Caco-2 (cell line): ENCODE measurements at regions of chr12 and their contacts with region 1.

Region 1: GRCh38 chr12:100266835-100267618 is at the starts of genes DEPDC4 and SCYL2:
- DNase-seq: peak; percentile 95 to 96
- H3K4me3 ChIP-seq: peak within 1 kb of the TSS; percentile 76
- H3K4me3 Mint-ChIP-seq: peak within 1 kb of the TSS; percentile 99
- H3K27ac Mint-ChIP-seq: peak within 1 kb of the TSS; percentile 98
- H3K4me1 ChIP-seq: peaks cover 8% of the 10 kb centered on the region
- H3K4me1 Mint-ChIP-seq: peaks cover 16% of the 10 kb centered on the region
- H3K27me3 ChIP-seq: no peaks in the 10 kb centered on the region
- H3K27me3 Mint-ChIP-seq: no peaks in the 10 kb centered on the region
- CTCF ChIP-seq: no peak
- total RNA-seq, gene DEPDC4: 3.9 and 4.9 TPM in 2 replicates
- total RNA-seq, gene SCYL2: 49.5 and 55.2 TPM in 2 replicates

Region 2: DNA sequence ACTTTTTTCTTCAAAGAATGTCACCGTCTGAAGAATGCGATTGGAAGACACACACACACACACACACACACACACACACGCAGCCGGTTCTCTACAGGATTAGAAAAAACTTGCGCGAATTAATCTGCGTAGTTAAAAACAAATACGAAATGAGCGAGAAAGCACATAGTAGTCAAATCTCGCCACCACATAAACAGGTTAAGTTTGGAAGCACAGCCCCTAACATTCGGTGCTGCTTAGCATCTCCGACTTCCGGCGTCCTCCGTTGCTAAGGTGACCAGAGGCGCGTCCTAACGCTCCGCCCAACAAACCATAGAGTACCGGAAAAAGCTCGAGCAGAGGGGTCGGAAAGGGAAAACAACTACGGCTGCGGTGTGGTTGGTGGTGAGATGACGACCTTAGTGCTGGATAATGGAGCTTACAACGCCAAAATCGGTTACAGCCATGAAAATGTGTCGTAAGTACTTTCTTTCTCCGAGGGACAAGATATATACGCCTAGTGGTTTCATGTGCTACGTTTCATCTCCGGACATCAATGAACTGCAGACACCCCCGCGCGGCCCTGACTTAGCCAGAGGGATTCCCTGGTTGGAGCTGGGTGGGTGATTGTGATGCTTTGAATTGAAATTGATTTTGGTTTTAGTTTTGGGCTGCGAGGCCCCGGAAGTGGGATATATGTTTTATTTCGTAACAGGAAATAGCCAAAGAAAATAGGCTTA is 66.4 kb before region 1 on chr12 and contains the start of gene ACTR6:
- CTCF ChIA-PET with region 1: no interaction called
- POLR2A ChIA-PET with region 1: interaction called, 3 read pairs
- intact Hi-C with region 1: loop called (anchors 2 kb)
- DNase-seq: peak; percentile 94
- H3K4me3 ChIP-seq: peak within 1 kb of the TSS; percentile 65
- H3K4me3 Mint-ChIP-seq: peak within 1 kb of the TSS; percentile 88
- H3K27ac Mint-ChIP-seq: peak within 1 kb of the TSS; percentile 48
- H3K4me1 ChIP-seq: peaks cover 7% of the 10 kb centered on the region
- H3K4me1 Mint-ChIP-seq: no peaks in the 10 kb centered on the region
- H3K27me3 ChIP-seq: no peaks in the 10 kb centered on the region
- H3K27me3 Mint-ChIP-seq: no peaks in the 10 kb centered on the region
- CTCF ChIP-seq: no peak
- total RNA-seq, gene ACTR6: 25.0 and 26.0 TPM in 2 replicates

Region 3: GRCh38 chr12:100234598-100235304 is 32.3 kb before region 1 on chr12:
- CTCF ChIA-PET with region 1: interaction called, 6 read pairs
- POLR2A ChIA-PET with region 1: interaction called, 3 read pairs
- intact Hi-C with region 1: loop called (anchors 2 kb)
- DNase-seq: peak in 1 of 2 experiments; percentile 31
- H3K4me3 ChIP-seq: no peak overlapping the region
- H3K4me3 Mint-ChIP-seq: peak overlapping the region; percentile 23
- H3K27ac Mint-ChIP-seq: no peak overlapping the region
- H3K4me1 ChIP-seq: peaks cover 9% of the 10 kb centered on the region
- H3K4me1 Mint-ChIP-seq: peaks cover 13% of the 10 kb centered on the region
- H3K27me3 ChIP-seq: no peaks in the 10 kb centered on the region
- H3K27me3 Mint-ChIP-seq: no peaks in the 10 kb centered on the region
- CTCF ChIP-seq: peak; percentile 53 to 64

Region 4: DNA sequence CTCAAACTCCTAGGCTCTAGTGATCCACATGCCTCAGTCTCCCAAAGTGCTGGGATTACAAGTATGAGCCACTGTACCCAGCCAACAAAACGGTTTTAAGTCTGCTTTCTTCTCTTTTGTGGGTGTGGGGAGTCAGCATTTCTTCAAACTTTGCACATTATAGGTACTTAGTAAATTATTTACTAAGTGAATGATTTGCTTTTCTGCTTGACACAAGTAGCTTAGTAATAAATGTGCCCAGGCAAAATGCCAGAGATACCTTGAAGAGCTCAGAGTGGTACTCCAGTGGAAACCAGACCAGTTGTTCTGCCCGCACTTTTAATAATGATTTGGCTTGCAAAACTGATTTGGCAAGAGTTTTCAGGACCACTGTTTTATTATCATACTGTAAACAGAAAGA is 15.1 kb before region 1 on chr12:
- CTCF ChIA-PET with region 1: interaction called, 5 read pairs
- POLR2A ChIA-PET with region 1: interaction called, 8 read pairs
- intact Hi-C with region 1: loop called (anchors 2 kb)
- DNase-seq: no peak
- H3K4me3 ChIP-seq: no peak overlapping the region
- H3K4me3 Mint-ChIP-seq: no peak overlapping the region
- H3K27ac Mint-ChIP-seq: no peak overlapping the region
- H3K4me1 ChIP-seq: peaks cover 19% of the 10 kb centered on the region
- H3K4me1 Mint-ChIP-seq: peaks cover 18% of the 10 kb centered on the region
- H3K27me3 ChIP-seq: no peaks in the 10 kb centered on the region
- H3K27me3 Mint-ChIP-seq: no peaks in the 10 kb centered on the region
- CTCF ChIP-seq: no peak

Region 5: GRCh38 chr12:100279607-100280244 is 12.7 kb after region 1 on chr12:
- CTCF ChIA-PET with region 1: interaction called, 11 read pairs
- POLR2A ChIA-PET with region 1: interaction called, 23 read pairs
- intact Hi-C with region 1: loop called (anchors 1 kb)
- DNase-seq: peak; percentile 60 to 63
- H3K4me3 ChIP-seq: no peak overlapping the region
- H3K4me3 Mint-ChIP-seq: peak overlapping the region; percentile 32
- H3K27ac Mint-ChIP-seq: peak overlapping the region; percentile 86
- H3K4me1 ChIP-seq: peaks cover 18% of the 10 kb centered on the region
- H3K4me1 Mint-ChIP-seq: peaks cover 18% of the 10 kb centered on the region
- H3K27me3 ChIP-seq: no peaks in the 10 kb centered on the region
- H3K27me3 Mint-ChIP-seq: no peaks in the 10 kb centered on the region
- CTCF ChIP-seq: no peak